PC-3 (cell line): ENCODE measurements at regions of chr1 and their contacts with region 1.

Region 1: DNA sequence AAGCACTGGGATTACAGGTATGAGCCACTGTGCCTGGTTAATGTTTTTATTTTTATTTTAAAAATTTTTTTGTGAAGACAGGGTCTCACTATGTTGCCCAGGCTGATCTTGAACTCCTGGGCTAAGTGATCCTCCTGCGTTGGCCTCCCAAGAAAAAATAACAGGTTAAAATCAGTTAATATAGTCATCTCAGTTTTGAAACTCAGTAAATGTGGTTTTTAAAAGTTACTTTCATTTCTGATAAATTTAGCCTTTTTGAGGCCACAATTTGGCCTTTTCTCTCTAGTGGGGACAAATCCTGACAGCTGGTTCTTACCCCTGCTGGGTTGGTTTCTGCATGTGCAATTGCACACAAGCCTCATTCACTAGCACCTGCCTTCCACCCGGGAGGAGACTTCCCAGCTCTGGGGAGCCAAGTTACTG is 13.3 kb downstream of the PMF1 start:
- DNase-seq: no peak
- ATAC-seq: no peak
- H3K4me3 ChIP-seq: no peak overlapping the region
- H3K27ac ChIP-seq: no peak overlapping the region
- H3K4me1 ChIP-seq: peaks cover 12% of the 10 kb centered on the region
- H3K27me3 ChIP-seq: no peaks in the 10 kb centered on the region
- CTCF ChIP-seq: no peak

Region 2: DNA sequence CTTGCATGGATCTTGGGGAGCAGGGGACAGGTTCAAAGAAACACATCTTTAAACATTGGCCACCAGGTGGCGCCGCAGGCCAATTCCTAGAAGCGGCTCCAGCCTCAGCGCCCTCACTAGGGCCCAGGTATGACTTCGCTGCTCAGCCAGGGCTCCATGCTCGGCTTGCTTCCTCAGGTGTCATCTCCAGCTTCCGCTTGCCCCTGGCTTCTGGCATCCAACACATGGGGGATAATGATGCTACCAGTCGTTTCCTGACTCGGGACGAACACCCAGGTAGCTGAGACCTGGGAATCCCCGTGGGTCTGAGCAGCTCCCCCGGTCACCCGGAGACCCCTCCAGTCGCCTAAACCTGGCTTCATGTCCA is 135.3 kb before region 1 on chr1:
- CTCF ChIA-PET with region 1: interaction called, 9 read pairs
- POLR2A ChIA-PET with region 1: no interaction called
- intact Hi-C with region 1: loop called (anchors 1 kb)
- DNase-seq: peak; percentile 97
- ATAC-seq: peak; percentile 95
- H3K4me3 ChIP-seq: no peak overlapping the region
- H3K27ac ChIP-seq: no peak overlapping the region
- H3K4me1 ChIP-seq: peaks cover 21% of the 10 kb centered on the region
- H3K27me3 ChIP-seq: no peaks in the 10 kb centered on the region
- CTCF ChIP-seq: peak; percentile 96

Region 3: GRCh38 chr1:156129706-156130581 is 96.2 kb before region 1 on chr1:
- CTCF ChIA-PET with region 1: interaction called, 21 read pairs
- POLR2A ChIA-PET with region 1: no interaction called
- intact Hi-C with region 1: no loop called
- DNase-seq: peak; percentile 100
- ATAC-seq: peak; percentile 46
- H3K4me3 ChIP-seq: peak overlapping the region; percentile 58; the same call in 1 of the 2 replicates
- H3K27ac ChIP-seq: peak overlapping the region; percentile 98
- H3K4me1 ChIP-seq: peaks cover 55% of the 10 kb centered on the region
- H3K27me3 ChIP-seq: no peaks in the 10 kb centered on the region
- CTCF ChIP-seq: peak; percentile 99

Region 4: DNA sequence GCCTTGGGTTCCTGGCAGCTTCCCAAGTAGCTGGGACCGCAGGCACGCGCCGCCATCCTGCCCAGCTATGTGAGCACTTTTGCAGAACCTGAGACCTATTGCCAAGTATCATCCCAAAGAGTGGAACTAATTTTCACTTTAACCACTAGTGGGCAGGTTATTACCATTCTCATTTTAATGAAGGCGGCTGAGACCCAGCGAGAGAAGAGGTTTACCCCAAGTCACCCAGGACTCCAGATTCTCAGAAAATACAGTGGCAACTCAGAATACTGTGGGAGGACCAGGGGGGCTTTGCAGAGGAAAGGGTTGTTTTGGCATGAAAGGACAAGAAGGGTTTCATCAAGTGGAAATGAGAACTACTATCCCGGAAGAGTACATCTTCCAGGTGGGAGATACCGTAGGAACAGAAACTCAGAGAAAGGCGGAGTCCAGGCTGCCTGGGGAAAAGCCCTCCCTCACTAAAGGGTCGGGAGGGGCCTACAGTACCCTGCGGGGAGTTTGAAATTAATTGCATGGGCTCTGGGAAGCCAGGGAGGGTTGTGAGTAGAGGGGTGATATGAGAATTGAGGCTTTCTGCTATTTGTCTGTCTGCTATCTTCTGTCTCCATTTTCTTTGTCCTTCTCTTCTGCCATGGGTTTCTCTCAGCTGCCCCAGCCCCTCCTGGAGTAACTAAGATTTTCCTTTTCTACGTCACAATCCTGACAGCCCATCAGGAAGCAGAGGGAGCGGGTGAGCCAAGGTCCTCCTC is 79.9 kb before region 1 on chr1:
- CTCF ChIA-PET with region 1: interaction called, 74 read pairs
- POLR2A ChIA-PET with region 1: interaction called, 9 read pairs
- intact Hi-C with region 1: loop called (anchors 1 kb)
- DNase-seq: peak; percentile 97
- ATAC-seq: peak; percentile 81
- H3K4me3 ChIP-seq: no peak overlapping the region
- H3K27ac ChIP-seq: 0 out of 2 replicates have a peak overlapping the region, but pooled peaks have one; percentile 1
- H3K4me1 ChIP-seq: peaks cover 15% of the 10 kb centered on the region
- H3K27me3 ChIP-seq: no peaks in the 10 kb centered on the region
- CTCF ChIP-seq: peak; percentile 85

Region 5: DNA sequence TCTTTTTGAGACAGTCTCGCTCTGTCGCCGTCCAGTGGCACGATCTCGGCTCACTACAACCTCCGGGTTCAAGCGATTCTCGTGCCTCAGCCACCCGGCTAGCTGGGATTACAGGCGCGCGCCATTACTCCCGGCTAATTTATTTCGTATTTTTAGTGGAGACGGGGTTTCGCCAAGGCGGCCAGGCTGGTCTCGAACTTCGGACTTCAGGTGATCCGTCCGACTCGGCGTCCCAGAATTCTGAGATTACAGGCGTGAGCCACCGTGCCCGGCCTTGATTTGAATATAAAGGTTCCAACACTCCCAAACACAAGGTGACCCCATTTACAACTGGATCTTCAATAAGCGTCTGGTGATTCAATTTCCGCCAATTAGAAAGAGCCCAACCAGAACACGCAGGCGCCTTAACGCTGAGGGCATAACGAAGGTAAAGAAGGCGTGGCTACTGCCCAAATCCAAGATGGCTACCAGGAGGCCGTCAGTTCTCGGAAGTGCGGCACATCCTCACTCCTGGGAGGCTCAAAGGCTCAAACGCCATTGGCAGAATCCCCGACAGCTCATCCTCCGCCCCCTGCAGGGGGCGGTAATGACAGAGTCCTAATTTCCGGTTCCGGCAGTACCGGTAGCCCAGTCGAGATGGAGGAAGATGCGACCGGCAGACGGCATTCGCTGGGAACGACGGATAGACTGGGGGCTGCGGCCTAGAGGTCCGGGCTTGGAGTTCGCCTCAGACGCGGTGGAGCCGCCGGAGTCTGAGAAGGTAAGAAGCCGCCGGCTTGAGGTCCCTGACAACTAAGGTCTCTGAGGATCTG is 32.4 kb before region 1 on chr1 and contains the start of gene SLC25A44:
- CTCF ChIA-PET with region 1: interaction called, 17 read pairs
- POLR2A ChIA-PET with region 1: interaction called, 10 read pairs
- intact Hi-C with region 1: no loop called
- DNase-seq: peak; percentile 100
- ATAC-seq: peak; percentile 98
- H3K4me3 ChIP-seq: peak within 1 kb of the TSS; percentile 87
- H3K27ac ChIP-seq: peak within 1 kb of the TSS; percentile 67
- H3K4me1 ChIP-seq: peaks cover 6% of the 10 kb centered on the region
- H3K27me3 ChIP-seq: no peaks in the 10 kb centered on the region
- CTCF ChIP-seq: peak; percentile 43
- total RNA-seq, gene SLC25A44: 28.1 and 33.1 TPM in 2 replicates

Region 6: GRCh38 chr1:156212833-156213643 is 13.1 kb before region 1 on chr1 and contains the start of gene PMF1:
- CTCF ChIA-PET with region 1: interaction called, 19 read pairs
- POLR2A ChIA-PET with region 1: interaction called, 11 read pairs
- intact Hi-C with region 1: no loop called
- DNase-seq: peak; percentile 97
- ATAC-seq: peak; percentile 96
- H3K4me3 ChIP-seq: peak within 1 kb of the TSS; percentile 84
- H3K27ac ChIP-seq: peak within 1 kb of the TSS; percentile 85
- H3K4me1 ChIP-seq: peaks cover 23% of the 10 kb centered on the region
- H3K27me3 ChIP-seq: no peaks in the 10 kb centered on the region
- CTCF ChIP-seq: no peak
- total RNA-seq, gene PMF1: 131 and 163 TPM in 2 replicates

Region 7: DNA sequence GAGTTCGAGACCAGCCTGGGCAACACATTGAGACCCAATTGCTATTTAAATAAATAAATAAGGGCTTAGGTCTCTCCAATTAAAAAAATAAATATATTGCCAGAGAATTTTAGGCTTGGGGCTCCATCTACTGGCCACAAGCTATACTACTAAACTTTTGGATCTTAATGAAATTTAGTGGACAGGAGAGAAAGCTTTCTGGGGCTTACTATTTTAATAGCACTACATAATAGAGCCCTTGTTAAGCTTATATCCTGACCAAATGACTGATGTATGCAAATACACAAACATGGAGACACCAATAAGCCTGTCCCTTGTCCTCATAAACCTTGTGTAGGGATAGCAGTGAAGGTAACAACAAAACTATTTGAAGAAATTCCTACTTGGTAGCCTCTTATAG is 93.5 kb after region 1 on chr1:
- CTCF ChIA-PET with region 1: interaction called, 11 read pairs
- POLR2A ChIA-PET with region 1: no interaction called
- intact Hi-C with region 1: no loop called
- DNase-seq: peak; percentile 65
- ATAC-seq: peak; percentile 27
- H3K4me3 ChIP-seq: no peak overlapping the region
- H3K27ac ChIP-seq: no peak overlapping the region
- H3K4me1 ChIP-seq: peaks cover 11% of the 10 kb centered on the region
- H3K27me3 ChIP-seq: no peaks in the 10 kb centered on the region
- CTCF ChIP-seq: peak; percentile 83